ENCODE measurements at regions of chrX and their contacts with region 1.

Region 1: DNA sequence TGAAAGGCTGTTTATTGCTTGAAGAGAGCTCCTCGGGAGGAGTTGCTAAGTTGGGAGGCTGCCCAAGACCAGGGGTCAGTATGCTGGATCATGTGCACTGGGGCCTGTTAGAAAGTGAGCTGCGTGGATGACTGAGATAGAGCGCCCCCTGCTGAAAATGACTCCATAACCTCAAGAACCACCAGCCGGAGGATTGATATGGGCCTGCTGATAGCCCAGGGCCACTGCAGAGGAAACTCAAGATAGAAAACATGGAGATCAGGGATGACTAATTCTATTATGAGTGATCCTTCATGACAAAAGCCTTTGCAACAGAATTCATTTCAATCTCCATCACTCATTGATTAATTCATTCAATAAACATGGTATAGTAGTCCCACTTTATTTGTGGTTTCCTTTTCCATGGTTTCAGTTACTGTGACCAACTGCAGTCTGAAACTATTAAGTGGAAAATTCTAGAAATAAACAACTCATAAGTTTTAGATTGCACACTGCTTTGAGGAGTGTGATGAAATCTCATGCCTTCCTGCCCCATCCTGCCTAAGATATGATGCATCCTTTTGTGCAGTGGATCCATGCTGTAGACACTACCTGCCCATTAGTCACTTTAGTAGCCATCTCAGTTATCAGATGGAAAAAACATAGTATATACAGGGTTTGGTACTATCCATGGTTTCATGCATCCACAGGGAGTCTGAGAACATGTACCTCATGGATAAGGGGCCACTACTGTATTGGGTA is 126.7 kb upstream of the MBNL3 start:
- DNase-seq: no peak
- ATAC-seq: peak; percentile 93
- H3K4me3 ChIP-seq: no peak overlapping the region
- H3K27ac ChIP-seq: no peak overlapping the region
- H3K4me1 ChIP-seq: no peaks in the 10 kb centered on the region
- H3K27me3 ChIP-seq: no peaks in the 10 kb centered on the region
- CTCF ChIP-seq: peak; percentile 53 to 59 (median 54)
- EP300 ChIP-seq: no peak
- POLR2A ChIP-seq: no peak
- RAD21 ChIP-seq: peak; percentile 51

Region 2: DNA sequence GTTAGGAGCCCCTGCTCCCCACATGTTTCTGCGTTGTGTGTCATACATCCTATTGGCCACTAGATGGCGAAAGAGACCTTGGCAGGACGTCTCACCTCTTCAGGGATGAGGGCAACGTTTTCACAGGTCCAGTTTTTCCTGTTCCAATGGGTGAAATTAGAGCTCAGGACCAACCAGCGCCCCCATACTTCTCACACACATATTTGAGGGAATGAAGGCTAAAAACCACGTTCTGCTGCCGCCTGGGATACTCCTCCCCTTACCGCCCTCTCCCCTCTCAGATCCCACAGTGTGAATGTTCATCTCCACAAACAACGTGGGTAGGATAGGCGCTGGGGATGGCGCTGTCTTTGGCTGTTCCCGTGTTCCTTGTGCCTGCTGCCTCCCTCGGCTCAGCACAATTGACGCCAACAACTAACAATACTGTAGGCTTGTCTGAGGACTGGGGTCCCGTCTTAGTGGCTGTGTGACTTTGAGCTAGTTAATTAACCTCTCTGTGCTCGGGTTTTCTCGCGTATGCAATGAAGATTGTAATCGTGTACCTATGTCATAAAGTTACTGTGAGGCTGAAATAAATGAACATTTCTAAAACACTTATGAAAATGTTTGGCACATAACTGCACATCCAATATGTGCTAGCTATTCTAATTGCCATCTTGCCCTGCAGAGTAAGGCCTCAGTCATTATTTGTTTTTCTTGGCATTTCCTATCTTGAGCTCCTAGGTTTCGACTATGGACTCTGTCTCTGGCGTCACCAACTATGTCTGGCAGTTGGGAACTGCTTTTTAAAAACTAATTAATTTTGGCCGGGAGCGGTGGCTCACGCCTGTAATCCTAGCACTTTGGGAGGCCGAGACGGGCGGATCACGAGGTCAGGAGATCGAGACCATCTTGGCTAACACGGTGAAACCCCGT is 773.8 kb before region 1 on chrX:
- CTCF ChIA-PET with region 1: interaction called, 11 read pairs
- POLR2A ChIA-PET with region 1: no interaction called
- RAD21 ChIA-PET with region 1: interaction called, 5 read pairs
- SMC1A ChIA-PET with region 1: interaction called, 12 read pairs
- in situ Hi-C with region 1: no loop called
- intact Hi-C with region 1: no loop called
- DNase-seq: no peak
- ATAC-seq: peak; percentile 98
- H3K4me3 ChIP-seq: no peak overlapping the region
- H3K27ac ChIP-seq: no peak overlapping the region
- H3K4me1 ChIP-seq: no peaks in the 10 kb centered on the region
- H3K27me3 ChIP-seq: no peaks in the 10 kb centered on the region
- CTCF ChIP-seq: peak; percentile 85 to 90 (median 88)
- EP300 ChIP-seq: no peak
- POLR2A ChIP-seq: no peak
- RAD21 ChIP-seq: peak; percentile 96

Region 3: GRCh38 chrX:132086672-132087071 is 528.9 kb before region 1 on chrX:
- CTCF ChIA-PET with region 1: interaction called, 21 read pairs
- POLR2A ChIA-PET with region 1: no interaction called
- RAD21 ChIA-PET with region 1: interaction called, 4 read pairs
- SMC1A ChIA-PET with region 1: interaction called, 3 read pairs
- in situ Hi-C with region 1: no loop called
- intact Hi-C with region 1: loop called (anchors 5 kb)
- DNase-seq: no peak
- ATAC-seq: no peak
- H3K4me3 ChIP-seq: no peak overlapping the region
- H3K27ac ChIP-seq: no peak overlapping the region
- H3K4me1 ChIP-seq: no peaks in the 10 kb centered on the region
- H3K27me3 ChIP-seq: no peaks in the 10 kb centered on the region; a peak in 1 of 4 replicates
- CTCF ChIP-seq: no peak
- EP300 ChIP-seq: no peak
- POLR2A ChIP-seq: no peak
- RAD21 ChIP-seq: no peak

Region 4: GRCh38 chrX:132092439-132093065 is 523.0 kb before region 1 on chrX:
- CTCF ChIA-PET with region 1: interaction called, 21 read pairs
- POLR2A ChIA-PET with region 1: no interaction called
- RAD21 ChIA-PET with region 1: interaction called, 4 read pairs
- SMC1A ChIA-PET with region 1: interaction called, 7 read pairs
- in situ Hi-C with region 1: no loop called
- intact Hi-C with region 1: loop called (anchors 5 kb)
- DNase-seq: peak; percentile 25
- ATAC-seq: peak; percentile 93
- H3K4me3 ChIP-seq: no peak overlapping the region
- H3K27ac ChIP-seq: no peak overlapping the region
- H3K4me1 ChIP-seq: no peaks in the 10 kb centered on the region
- H3K27me3 ChIP-seq: no peaks in the 10 kb centered on the region
- CTCF ChIP-seq: peak; percentile 76 to 81 (median 81)
- EP300 ChIP-seq: no peak
- POLR2A ChIP-seq: no peak
- RAD21 ChIP-seq: peak; percentile 71

Region 5: DNA sequence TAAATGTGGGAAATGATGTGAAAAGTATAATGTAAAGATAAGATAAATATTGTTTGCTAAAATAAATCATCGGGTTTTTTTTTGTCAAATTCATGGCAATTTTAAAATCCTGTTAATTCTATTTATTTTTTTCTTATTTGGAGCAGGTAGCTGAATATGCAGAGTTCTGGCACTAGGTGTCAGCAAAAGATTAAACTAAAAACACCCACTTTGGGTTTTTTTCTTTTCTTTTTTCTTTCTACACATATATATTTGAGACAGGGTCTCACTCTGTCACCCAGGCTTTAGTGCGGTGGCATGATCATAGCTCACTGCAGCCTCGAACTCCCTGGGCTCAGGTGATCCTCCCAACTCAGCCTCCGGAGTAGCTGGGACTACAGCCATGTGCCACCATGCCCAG is 389.4 kb before region 1 on chrX:
- CTCF ChIA-PET with region 1: interaction called, 28 read pairs
- POLR2A ChIA-PET with region 1: no interaction called
- RAD21 ChIA-PET with region 1: interaction called, 20 read pairs
- SMC1A ChIA-PET with region 1: interaction called, 12 read pairs
- in situ Hi-C with region 1: loop called (anchors 5 kb)
- intact Hi-C with region 1: loop called (anchors 2 kb)
- DNase-seq: no peak
- ATAC-seq: no peak
- H3K4me3 ChIP-seq: no peak overlapping the region
- H3K27ac ChIP-seq: no peak overlapping the region
- H3K4me1 ChIP-seq: no peaks in the 10 kb centered on the region
- H3K27me3 ChIP-seq: no peaks in the 10 kb centered on the region
- CTCF ChIP-seq: peak in 1 of 3 experiments; percentile 37; a peak in 2 of 6 replicates
- EP300 ChIP-seq: no peak
- POLR2A ChIP-seq: no peak
- RAD21 ChIP-seq: peak; percentile 75

Region 6: DNA sequence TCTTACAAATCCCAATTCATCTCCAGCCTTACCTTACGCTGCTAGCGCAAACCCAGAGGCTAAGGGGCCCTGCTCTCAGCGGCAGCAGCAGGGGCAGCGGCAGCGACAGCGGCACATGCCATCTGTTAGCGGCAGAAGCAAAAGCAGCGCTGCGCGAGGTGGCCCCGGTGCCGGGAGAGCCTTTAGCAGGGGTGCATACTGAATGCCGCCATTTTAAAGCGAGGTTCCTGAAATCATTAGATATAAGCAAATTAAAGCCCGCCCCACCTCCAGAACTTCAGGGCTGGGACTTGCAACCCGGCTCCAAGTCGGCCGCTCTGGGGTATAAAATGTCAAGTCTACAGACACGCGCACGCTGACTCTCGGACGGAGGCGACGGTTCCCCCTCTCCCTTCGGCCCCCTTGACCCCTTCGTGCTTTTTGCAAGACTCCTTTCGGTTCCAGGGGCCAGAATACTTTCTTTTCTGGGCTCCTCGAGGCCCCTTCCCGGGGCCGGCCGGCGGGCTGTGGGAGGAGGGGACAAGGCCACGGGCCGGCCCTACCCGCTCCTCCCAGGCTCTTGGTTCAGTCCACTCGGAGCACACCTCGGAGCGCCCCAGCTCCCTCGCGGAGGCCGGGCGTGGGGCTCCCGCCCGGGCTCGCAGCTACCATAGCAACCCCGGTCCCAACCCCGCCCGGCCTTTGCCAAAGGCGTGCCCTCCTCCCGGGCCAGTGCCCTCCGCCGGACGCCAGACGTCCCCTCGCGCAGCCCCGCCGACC is 126.6 kb before region 1 on chrX and contains the start of gene MBNL3:
- CTCF ChIA-PET with region 1: no interaction called
- POLR2A ChIA-PET with region 1: no interaction called
- RAD21 ChIA-PET with region 1: no interaction called
- SMC1A ChIA-PET with region 1: no interaction called
- in situ Hi-C with region 1: no loop called
- intact Hi-C with region 1: loop called (anchors 5 kb)
- DNase-seq: no peak
- ATAC-seq: peak; percentile 79
- H3K4me3 ChIP-seq: peak within 1 kb of the TSS; percentile 72
- H3K27ac ChIP-seq: peak within 1 kb of the TSS; percentile 81
- H3K4me1 ChIP-seq: no peaks in the 10 kb centered on the region
- H3K27me3 ChIP-seq: no peaks in the 10 kb centered on the region
- CTCF ChIP-seq: no peak
- EP300 ChIP-seq: no peak
- POLR2A ChIP-seq: peak; percentile 72
- RAD21 ChIP-seq: no peak
- polyA plus RNA-seq, gene MBNL3: 3.4 to 6.1 TPM

Region 7: GRCh38 chrX:132631579-132632232 is 16.1 kb after region 1 on chrX:
- CTCF ChIA-PET with region 1: interaction called, 21 read pairs
- POLR2A ChIA-PET with region 1: no interaction called
- RAD21 ChIA-PET with region 1: interaction called, 3 read pairs
- SMC1A ChIA-PET with region 1: no interaction called
- in situ Hi-C with region 1: no loop called
- intact Hi-C with region 1: no loop called
- DNase-seq: no peak
- ATAC-seq: peak; percentile 80
- H3K4me3 ChIP-seq: no peak overlapping the region
- H3K27ac ChIP-seq: no peak overlapping the region
- H3K4me1 ChIP-seq: no peaks in the 10 kb centered on the region
- H3K27me3 ChIP-seq: no peaks in the 10 kb centered on the region
- CTCF ChIP-seq: peak; percentile 51 to 60 (median 58); a peak in 5 of 6 replicates
- EP300 ChIP-seq: no peak
- POLR2A ChIP-seq: no peak
- RAD21 ChIP-seq: peak; percentile 69

Region 8: GRCh38 chrX:133185938-133186337 is 570.4 kb after region 1 on chrX:
- CTCF ChIA-PET with region 1: no interaction called
- POLR2A ChIA-PET with region 1: no interaction called
- RAD21 ChIA-PET with region 1: no interaction called
- SMC1A ChIA-PET with region 1: no interaction called
- in situ Hi-C with region 1: no loop called
- intact Hi-C with region 1: no loop called
- DNase-seq: no peak
- ATAC-seq: no peak
- H3K4me3 ChIP-seq: no peak overlapping the region
- H3K27ac ChIP-seq: no peak overlapping the region
- H3K4me1 ChIP-seq: no peaks in the 10 kb centered on the region
- H3K27me3 ChIP-seq: no peaks in the 10 kb centered on the region
- CTCF ChIP-seq: no peak
- EP300 ChIP-seq: no peak
- POLR2A ChIP-seq: no peak
- RAD21 ChIP-seq: no peak